ENCODE measurements at regions of chr20 and their contacts with region 1.

Region 1: GRCh38 chr20:1802385-1803060 is 92.7 kb upstream of the SIRPA start:
- DNase-seq: no peak
- H3K4me3 Mint-ChIP-seq: peak overlapping the region; percentile 69
- H3K27ac Mint-ChIP-seq: no peak overlapping the region
- H3K4me1 Mint-ChIP-seq: peaks cover 7% of the 10 kb centered on the region
- H3K27me3 Mint-ChIP-seq: peaks cover 50% of the 10 kb centered on the region

Region 2: GRCh38 chr20:1644101-1644962 is 158.2 kb before region 1 on chr20:
- intact Hi-C with region 1: no loop called
- DNase-seq: no peak
- H3K4me3 Mint-ChIP-seq: no peak overlapping the region
- H3K27ac Mint-ChIP-seq: no peak overlapping the region
- H3K4me1 Mint-ChIP-seq: peaks cover 25% of the 10 kb centered on the region
- H3K27me3 Mint-ChIP-seq: no peaks in the 10 kb centered on the region

Region 3: DNA sequence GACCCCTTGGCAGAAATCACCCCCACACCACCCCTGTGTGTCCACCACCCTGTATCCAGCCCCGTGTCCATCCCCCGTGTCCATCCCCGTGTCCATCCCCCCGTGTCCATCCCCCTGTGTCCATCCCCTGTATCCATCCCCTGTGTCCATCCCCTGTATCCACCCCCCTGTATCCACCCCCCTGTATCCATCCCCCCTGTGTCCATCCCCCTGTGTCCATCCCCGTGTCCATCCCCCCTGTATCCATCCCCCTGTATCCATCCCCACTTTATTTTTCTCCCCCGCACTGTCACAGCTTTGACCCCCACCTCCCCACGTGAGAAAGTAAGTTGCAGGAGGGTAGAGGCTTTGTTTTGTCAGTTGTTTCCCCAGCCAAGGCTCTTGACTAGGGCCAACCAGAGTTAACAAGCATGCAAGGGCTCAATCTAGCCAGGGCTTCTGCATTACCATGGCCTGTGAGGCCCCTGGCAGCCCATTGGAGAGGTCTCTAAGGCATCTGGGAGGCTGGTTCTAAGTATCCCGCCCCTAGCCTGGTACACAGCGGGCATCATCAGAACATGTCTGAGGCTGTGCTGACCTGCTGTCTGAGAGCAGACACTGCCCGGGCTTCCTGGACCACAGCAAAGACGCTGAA is 74.6 kb after region 1 on chr20:
- intact Hi-C with region 1: loop called (anchors 10 kb)
- DNase-seq: no peak
- H3K4me3 Mint-ChIP-seq: no peak overlapping the region
- H3K27ac Mint-ChIP-seq: no peak overlapping the region
- H3K4me1 Mint-ChIP-seq: no peaks in the 10 kb centered on the region
- H3K27me3 Mint-ChIP-seq: no peaks in the 10 kb centered on the region

Region 4: DNA sequence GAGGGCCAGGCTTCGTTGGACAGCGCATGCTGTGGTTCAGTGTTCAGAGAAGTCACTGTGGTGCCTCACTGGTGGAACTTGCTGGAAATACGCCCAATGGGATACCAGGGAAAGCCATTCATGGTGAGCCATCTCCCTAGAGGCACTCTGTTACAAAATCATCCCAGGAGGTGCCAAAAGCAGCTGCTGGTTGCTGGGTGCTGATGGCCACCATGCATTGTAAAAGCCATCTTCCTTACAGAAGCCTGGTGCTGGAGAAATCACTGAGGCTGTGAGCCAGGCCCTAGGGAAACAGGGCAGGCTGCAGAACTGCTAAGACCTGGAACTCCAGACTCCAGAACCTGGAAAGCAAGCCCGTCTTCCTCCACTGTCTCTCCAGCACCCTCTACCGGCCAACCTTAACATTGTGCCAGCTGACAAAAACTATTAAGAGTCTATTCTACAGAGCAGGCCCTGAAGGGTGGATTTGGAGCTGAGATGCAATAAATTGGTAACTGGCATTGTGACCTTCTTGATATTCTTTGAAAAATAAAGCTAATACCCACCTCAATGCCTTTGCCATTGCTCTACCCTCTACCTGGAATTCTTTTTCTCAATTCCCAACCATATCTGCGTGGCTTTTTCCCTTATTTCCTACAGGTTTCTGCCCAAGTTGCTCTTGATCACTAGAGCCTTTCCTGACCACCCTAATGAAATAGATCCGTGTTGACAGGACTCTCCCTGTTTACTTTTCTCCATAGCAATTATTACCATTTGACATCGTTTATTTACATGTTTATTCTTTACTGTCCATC is 649.6 kb after region 1 on chr20:
- intact Hi-C with region 1: no loop called
- DNase-seq: peak; percentile 50
- H3K4me3 Mint-ChIP-seq: no peak overlapping the region
- H3K27ac Mint-ChIP-seq: no peak overlapping the region
- H3K4me1 Mint-ChIP-seq: peaks cover 29% of the 10 kb centered on the region
- H3K27me3 Mint-ChIP-seq: no peaks in the 10 kb centered on the region